Left ventricle myocardium superior (tissue), 1 donor: ENCODE measurements at regions of chr10 and their contacts with region 1.

Region 1: DNA sequence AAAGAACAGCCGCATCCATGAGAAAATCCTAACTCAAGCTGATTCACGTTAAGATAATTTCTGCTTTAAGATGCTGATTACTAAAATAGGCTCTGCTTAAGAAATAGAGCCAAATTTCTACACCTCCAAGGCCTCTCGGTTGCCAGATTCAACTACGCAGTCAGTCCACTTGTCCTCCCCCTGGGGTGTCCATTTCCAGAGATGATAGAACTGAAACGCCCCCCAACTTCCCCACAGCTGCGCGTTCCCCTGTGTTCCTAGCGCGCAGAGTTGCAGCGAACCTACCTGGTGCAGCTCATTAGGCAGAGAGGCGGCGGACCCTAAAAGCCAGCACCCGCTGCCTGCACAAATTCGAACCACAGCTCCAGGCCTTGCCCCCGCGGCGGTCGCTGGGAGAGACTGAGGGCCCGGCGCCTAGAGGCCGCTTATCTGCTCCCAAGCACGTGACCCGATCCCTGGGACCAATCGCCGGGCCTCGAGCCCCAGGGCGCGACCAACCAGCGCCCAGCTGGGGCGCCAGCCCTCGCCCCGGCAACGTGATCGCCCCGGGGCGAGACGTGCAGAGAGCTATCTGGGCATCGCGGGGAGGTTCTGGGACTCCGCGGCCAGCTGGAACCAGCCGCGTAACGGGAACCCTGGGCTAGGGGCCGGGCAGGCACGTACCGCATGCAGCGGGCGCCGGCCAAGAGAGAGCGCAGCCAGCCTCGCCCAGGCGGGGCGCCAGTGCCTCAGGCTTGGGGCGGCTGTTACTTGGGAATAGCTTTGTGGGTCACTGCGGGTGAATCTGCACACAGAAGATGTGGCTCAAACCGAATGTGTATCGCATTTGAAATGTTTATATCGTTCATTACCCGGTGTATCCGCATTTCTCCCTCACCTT is at the start of gene PPP1R3C:
- DNase-seq: peak; percentile 96
- ATAC-seq: peak; percentile 95
- total RNA-seq, gene PPP1R3C: 180 TPM

Region 2: GRCh38 chr10:91495402-91495801 is 137.5 kb before region 1 on chr10:
- intact Hi-C with region 1: loop called (anchors 5 kb)
- DNase-seq: no peak
- ATAC-seq: no peak

Region 3: DNA sequence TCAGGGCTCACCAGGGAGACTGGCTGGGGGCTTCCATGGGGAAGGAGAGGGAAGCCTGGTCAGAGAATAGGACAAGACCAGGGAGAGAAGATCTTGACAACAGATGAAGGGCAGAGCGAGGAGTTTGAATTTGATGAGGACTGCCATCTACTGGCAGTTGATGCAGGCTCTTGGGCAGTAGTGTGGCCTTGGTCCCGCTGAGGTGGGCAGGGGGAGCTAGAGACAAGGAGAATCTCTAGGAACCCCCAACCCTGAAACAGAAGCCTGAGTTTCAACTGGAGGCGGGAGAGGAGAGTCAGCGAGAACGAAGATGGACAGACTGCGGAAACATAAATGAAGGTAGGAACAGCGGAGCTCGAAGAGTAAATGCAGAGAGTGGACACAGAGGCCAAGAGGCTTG is 81.1 kb before region 1 on chr10:
- intact Hi-C with region 1: loop called (anchors 5 kb)
- DNase-seq: peak; percentile 55
- ATAC-seq: peak; percentile 92

Region 4: DNA sequence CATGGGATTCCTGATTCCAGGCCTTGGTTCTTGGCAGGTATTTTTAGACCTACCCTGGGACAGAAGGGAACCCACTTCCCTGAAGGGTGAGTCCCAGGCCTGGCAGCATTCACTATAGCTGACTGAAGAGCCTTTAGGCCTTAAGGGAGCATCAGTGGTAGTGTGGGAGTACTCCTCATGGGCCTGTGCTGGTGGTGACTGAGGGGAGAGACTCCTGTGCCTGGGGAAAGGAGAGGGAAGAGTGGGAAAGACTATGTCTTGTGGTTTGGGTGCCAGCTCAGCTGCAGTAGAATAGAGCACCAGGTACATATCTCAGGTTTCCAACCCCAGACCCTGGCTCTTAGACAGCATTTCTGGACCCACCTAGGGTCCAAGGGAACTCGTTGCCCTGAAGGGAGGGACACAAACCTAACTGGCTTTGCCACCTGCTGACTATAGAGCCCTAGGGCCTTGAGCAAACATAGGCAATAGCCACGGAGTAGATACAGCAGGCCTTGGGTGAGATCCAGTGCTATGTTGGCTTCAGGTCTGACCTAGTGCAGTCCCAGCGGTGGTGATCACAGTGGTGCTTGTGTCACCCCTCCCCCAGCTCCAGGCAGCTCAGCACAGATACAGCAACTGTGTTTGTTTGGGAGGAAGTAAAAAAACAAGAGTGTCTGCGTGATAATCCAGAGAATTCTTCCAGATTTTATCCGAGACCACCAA is 155.5 kb after region 1 on chr10:
- intact Hi-C with region 1: no loop called
- DNase-seq: no peak
- ATAC-seq: peak; percentile 36